H1 (cell line): ENCODE measurements at regions of chr5 and their contacts with region 1.

Region 1: DNA sequence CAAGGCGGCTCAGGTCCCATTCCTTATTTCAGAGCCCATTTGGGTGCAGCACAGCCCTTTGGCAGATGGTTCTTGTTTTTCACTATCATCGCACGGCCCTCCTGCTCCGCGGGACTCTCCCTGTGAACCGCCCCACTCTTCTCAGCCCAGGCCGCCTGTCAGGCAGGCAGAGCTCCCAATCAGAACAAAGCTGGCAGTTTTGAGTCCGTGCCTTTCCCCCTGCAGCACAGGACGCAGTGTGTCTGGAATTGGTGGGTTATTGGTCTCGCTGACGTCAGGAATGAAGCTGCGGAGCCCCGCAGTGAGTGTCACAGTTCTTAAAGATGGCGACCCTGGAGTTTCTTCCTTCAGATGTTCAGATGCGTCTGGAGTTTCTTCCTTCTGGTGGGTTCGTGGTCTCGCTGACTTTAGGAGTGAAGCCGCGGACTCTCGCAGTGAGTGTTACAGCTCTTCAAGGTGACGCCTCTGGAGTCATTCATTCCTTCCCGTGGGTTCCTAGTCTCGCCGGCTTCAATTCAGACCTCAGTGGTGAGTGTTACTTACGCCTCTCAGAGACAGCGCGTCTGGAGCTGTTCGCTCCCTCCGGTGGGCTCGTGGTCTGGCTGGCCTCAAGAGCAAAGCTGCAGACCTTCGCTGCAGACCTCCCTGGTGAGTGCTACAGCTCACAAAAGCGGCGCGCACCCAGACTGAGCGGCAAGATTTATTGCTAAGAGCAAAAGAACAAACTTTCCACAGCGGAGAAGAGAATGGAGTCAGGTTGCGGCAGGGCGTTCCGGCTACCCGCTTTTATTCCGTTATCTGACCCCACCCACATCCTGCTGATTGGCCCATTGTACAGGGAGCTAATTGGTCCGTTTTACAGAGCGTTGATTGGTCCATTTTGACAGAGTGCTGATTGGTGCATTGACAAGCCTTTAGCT is 7.5 kb downstream of the ZDHHC11B start:
- DNase-seq: peak in 1 of 2 experiments; percentile 41
- H3K4me3 ChIP-seq: no peak overlapping the region
- H3K27ac ChIP-seq: no peak overlapping the region
- H3K4me1 ChIP-seq: no peaks in the 10 kb centered on the region; a peak in 1 of 7 replicates
- H3K27me3 ChIP-seq: no peaks in the 10 kb centered on the region; a peak in 2 of 7 replicates
- CTCF ChIP-seq: no peak
- EP300 ChIP-seq: no peak
- POLR2A ChIP-seq: no peak
- RAD21 ChIP-seq: no peak

Region 2: DNA sequence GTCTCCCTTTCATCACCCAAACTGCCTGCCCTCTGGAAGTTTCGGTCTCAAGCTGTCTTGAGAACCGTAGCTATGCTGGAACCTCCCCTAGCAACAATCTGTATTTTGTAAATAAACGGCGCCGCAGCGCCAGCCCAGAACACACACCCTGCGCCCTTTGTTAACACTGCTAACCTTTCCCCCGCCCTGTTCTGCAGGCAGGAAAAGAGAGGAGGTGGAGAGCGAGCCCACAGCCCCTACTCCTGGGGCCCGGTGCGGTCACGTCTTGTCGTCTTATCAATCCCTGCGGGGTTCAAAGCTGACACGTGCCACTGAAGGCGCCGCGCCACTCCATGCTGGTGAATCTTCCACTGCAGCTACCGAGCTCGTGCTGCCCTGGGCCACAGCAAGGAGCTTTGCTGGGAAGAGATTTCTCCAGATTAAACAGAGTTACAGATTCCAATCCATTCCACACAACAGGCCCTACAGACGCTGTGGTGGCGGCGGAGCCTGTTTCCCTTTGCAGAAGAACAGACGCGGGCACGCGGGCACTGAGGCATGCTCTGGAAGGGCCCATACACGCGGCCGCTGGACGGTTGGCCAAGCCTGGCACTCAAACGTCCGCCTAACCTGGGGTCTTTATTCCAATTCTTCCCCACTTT is 17.8 kb before region 1 on chr5:
- CTCF ChIA-PET with region 1: interaction called, 19 read pairs
- POLR2A ChIA-PET with region 1: no interaction called
- DNase-seq: no peak
- H3K4me3 ChIP-seq: no peak overlapping the region
- H3K27ac ChIP-seq: 0 out of 2 replicates have a peak overlapping the region, but pooled peaks have one; percentile 8
- H3K4me1 ChIP-seq: no peaks in the 10 kb centered on the region; a peak in 1 of 7 replicates
- H3K27me3 ChIP-seq: no peaks in the 10 kb centered on the region; a peak in 1 of 7 replicates
- CTCF ChIP-seq: no peak
- EP300 ChIP-seq: no peak
- POLR2A ChIP-seq: no peak
- RAD21 ChIP-seq: no peak

Region 3: GRCh38 chr5:801472-801871 is 24.4 kb after region 1 on chr5:
- CTCF ChIA-PET with region 1: no interaction called
- POLR2A ChIA-PET with region 1: no interaction called
- DNase-seq: no peak
- H3K4me3 ChIP-seq: no peak overlapping the region
- H3K27ac ChIP-seq: no peak overlapping the region
- H3K4me1 ChIP-seq: peaks cover 0 to 3% (median under 1%) of the 10 kb centered on the region in 4 experiments; a peak in 1 of 7 replicates
- H3K27me3 ChIP-seq: peaks cover 0 to 1% (median 0%) of the 10 kb centered on the region in 4 experiments; a peak in 1 of 7 replicates
- CTCF ChIP-seq: no peak
- EP300 ChIP-seq: no peak
- POLR2A ChIP-seq: no peak
- RAD21 ChIP-seq: no peak

Region 4: DNA sequence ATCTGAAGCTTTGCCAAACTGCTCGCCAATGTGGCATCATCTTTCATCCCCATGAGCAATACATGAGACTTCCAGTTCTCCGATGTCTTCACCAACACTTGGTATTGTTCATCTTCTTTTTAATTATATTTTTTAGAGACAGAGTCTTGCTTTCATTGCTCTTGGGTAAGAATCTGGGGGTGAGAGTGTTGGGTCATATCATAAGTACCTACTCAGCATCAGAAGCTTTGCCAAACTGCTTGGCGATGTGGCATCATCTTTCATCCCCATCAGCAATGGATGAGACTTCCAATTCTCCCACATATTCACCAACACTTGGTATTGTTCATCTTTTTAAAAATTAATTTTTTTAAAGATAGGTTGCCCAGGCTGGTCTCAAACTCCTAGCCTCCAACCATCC is 38.4 kb after region 1 on chr5:
- CTCF ChIA-PET with region 1: no interaction called
- POLR2A ChIA-PET with region 1: no interaction called
- DNase-seq: no peak
- H3K4me3 ChIP-seq: no peak overlapping the region
- H3K27ac ChIP-seq: no peak overlapping the region
- H3K4me1 ChIP-seq: no peaks in the 10 kb centered on the region
- H3K27me3 ChIP-seq: no peaks in the 10 kb centered on the region
- CTCF ChIP-seq: no peak
- EP300 ChIP-seq: no peak
- POLR2A ChIP-seq: no peak
- RAD21 ChIP-seq: no peak